Gastrocnemius medialis (tissue), 4 donors: ENCODE measurements at regions of chr11 and their contacts with region 1.

Region 1: GRCh38 chr11:108019870-108020540 is 11.3 kb downstream of the CUL5 start:
- DNase-seq: peak; percentile 24 to 80
- ATAC-seq: peak; percentile 82 to 95
- H3K4me3 ChIP-seq: no peak overlapping the region
- H3K27ac ChIP-seq: peak overlapping the region; percentile 51 to 77 (median 70)
- H3K4me1 ChIP-seq: peaks cover 41 to 49% of the 10 kb centered on the region in 2 donors
- H3K27me3 ChIP-seq: no peaks in the 10 kb centered on the region
- CTCF ChIP-seq: no peak
- POLR2A ChIP-seq: no peak

Region 2: GRCh38 chr11:108037636-108038035 is 17.6 kb after region 1 on chr11:
- in situ Hi-C with region 1: no loop called
- intact Hi-C with region 1: loop called (anchors 2 kb)
- DNase-seq: no peak
- ATAC-seq: no peak
- H3K4me3 ChIP-seq: no peak overlapping the region
- H3K27ac ChIP-seq: peak overlapping the region; percentile 67 to 81 (median 72)
- H3K4me1 ChIP-seq: peaks cover 41 to 43% of the 10 kb centered on the region in 2 donors
- H3K27me3 ChIP-seq: no peaks in the 10 kb centered on the region
- CTCF ChIP-seq: no peak
- POLR2A ChIP-seq: no peak